Psoas muscle (tissue), 8 donors: ENCODE measurements at regions of chr11 and their contacts with region 1.

Region 1: DNA sequence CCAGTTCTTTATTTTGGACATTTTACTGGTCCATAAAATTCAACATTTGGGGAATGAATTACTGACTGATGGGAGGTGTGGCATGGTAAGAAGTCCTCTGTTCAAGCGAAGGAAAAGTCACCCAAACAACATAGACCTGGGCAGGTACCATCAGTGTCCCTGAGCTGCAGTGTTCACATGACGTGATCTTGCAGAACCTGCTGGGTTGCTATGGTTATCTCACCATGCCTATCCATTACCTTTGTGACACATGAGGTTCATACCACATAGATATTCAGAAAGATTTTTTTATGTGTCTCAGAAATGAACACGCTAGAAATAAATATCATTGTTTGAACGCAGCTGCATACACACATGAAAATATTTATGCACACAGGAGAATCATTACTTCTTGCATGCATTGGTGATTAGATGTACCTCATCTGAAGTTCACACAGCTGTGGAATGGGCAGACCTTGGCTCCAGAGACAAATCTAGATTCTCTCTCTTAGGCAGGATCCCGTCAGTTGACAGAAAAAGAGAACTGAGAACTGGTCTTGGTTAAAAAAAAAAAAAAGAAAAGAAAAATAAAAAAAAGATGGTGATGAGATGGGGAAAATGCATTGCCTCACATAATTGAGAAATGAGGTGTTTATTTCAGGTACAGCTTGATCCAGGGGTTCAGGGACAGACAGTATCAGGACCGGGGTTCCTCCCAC is 21.4 kb upstream of the RCN1 start:
- DNase-seq: no peak
- ATAC-seq: no peak
- H3K4me3 ChIP-seq: no peak overlapping the region
- H3K27ac ChIP-seq: no peak overlapping the region
- H3K4me1 ChIP-seq: no peaks in the 10 kb centered on the region
- H3K27me3 ChIP-seq: peaks cover 0 to 26% (median 4%) of the 10 kb centered on the region in 3 donors
- CTCF ChIP-seq: no peak

Region 2: DNA sequence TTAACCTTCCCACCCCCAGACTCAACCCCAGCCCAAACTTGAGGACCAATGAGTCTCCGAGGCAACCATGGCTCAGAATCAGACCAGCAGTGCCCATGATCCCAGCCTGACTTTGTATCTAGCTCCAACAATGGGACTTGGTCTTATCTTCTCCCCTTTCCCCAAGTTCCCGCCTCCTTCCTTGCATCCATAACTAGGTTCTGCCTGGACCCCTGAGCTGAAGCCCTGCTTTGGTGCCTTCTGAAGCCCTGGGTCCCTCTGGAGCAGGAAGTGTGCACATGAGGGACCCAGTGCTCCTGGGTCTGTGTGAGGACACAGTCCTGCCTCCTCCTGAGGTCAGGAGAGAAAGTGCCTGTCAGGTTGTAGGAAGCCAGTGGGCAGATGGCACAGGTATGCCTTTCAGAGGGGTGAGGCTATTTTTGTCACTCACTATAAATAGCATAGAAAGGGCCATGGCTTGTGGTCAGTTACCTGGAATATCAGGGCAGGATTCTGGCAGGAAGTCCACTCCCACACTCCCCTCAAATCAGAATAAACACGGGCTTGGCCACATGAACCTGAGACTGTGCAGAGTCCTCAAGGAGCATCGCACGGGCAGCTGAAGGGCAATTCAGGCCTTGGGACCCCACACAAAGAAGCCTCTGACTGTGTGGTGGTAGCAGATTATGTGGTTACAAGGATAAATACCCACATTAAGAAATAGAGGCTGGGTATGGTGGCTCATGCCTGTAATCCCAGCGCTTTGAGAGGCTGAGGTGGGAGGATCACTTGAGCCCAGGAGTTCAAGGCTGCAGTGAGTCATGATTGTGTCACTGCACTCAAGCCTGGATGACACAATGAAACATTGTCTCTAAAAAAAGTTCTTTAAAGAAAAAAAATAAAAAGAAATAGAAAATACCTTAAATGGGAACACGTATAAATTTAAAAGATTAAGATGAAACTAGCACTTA is 48.8 kb after region 1 on chr11:
- intact Hi-C with region 1: loop called in 1 of 2 experiments (anchors 10 kb)
- DNase-seq: no peak
- ATAC-seq: no peak
- H3K4me3 ChIP-seq: no peak overlapping the region
- H3K27ac ChIP-seq: no peak overlapping the region
- H3K4me1 ChIP-seq: no peaks in the 10 kb centered on the region
- H3K27me3 ChIP-seq: peaks cover 0 to 3% (median 0%) of the 10 kb centered on the region in 3 donors
- CTCF ChIP-seq: no peak

Region 3: DNA sequence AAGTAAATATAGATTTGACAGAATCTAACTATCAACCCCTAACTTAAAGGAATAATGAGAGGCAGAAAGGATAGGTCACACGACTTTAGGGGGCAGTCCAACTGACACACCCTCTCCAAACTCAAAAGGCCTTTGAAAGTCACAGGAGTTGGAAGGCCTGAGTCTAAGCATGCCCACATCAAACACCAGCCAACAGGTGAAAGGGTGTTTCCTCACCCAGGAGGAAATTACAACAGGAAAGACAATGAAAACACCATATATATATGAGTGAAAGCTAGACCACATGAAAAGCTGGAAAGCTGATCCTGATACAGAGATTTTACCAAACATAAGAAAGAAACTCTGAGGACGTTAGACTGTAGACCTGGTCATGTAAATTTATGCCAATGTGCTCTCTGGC is 935.7 kb after region 1 on chr11:
- intact Hi-C with region 1: no loop called
- DNase-seq: no peak
- ATAC-seq: no peak
- H3K4me3 ChIP-seq: no peak overlapping the region
- H3K27ac ChIP-seq: no peak overlapping the region
- H3K4me1 ChIP-seq: no peaks in the 10 kb centered on the region
- H3K27me3 ChIP-seq: no peaks in the 10 kb centered on the region
- CTCF ChIP-seq: no peak